HAP-1 (cell line): ENCODE measurements at regions of chr17 and their contacts with region 1.

Region 1: DNA sequence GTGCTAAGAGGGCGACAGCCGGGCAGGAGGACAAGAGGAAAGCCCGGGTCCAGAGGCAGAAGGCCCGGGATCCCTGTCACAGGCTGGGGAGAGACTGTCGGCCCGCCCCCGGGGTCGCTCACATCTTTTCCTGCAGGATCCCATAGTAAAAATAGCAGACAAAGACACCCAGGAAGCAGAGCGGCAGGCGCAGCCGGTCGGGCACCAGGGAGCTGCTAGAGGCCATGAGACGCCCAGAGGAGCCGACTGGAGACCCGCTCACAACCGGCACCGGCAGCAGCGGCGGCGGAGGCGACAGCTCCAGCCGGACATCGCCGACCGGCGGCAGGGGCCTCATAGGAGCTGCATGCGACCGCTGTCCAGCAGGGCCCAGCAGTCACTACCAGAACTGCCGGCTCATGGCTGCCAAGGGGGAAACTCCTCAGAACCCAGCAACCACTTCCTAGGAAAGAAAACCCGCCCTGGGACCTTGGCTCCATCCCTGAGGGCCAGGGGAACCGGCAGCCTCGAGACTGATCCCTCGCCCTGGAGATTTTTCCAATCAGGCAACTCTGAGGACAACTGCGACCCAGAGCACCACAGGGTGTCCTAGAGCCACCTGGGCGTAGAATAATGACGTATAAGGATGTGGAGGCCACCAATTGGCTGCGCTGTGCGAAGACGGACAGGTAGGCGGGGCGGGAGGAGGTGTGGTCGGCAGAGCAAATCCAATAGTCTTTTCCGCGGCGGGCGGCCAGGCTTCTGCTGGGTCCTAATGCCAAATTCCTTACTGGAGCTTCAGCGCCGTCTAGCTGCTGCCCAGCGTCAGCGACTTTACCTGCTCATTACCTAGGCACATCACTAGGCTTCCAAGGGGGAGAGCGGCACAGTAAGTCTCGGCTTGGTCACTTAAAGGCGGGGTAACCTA is at the start of gene SLC35B1:
- DNase-seq: peak; percentile 98 to 99
- H3K4me3 ChIP-seq: peak within 1 kb of the TSS; percentile 95
- H3K4me1 ChIP-seq: peaks cover 9% of the 10 kb centered on the region
- H3K27me3 ChIP-seq: no peaks in the 10 kb centered on the region

Region 2: DNA sequence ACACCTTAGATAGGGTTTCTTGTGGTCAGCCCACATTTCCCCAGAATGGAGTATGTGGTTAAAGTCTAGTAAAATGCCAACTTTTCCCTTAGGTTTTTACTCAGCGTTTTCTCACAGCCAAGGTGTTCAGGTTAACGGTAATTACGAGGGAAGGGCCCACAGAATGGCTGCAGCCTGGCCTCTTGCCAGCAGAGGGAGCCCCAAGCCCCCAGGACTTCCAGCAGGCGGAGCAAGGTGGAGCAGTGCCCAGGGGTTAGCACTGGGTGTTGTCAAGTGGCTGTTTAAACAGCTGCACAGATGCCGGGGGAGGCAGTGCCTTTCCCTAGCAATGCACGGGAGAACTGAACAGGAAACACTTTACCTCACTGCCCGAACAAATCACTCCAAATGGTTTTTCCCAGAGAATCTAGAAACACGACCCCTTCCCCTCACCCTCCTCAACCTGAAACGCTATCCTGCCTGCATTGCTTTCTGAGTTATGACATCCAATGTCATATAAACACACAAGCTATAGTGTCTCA is 299.8 kb before region 1 on chr17:
- in situ Hi-C with region 1: loop called (anchors 10 kb)
- DNase-seq: peak; percentile 54 to 85
- H3K4me3 ChIP-seq: no peak overlapping the region
- H3K4me1 ChIP-seq: no peaks in the 10 kb centered on the region
- H3K27me3 ChIP-seq: no peaks in the 10 kb centered on the region

Region 3: GRCh38 chr17:49843774-49844350 is 136.0 kb after region 1 on chr17:
- in situ Hi-C with region 1: loop called (anchors 10 kb)
- DNase-seq: peak; percentile 11 to 81
- H3K4me3 ChIP-seq: no peak overlapping the region
- H3K4me1 ChIP-seq: no peaks in the 10 kb centered on the region
- H3K27me3 ChIP-seq: no peaks in the 10 kb centered on the region

Region 4: GRCh38 chr17:49997791-49998703 is 290.2 kb after region 1 on chr17:
- in situ Hi-C with region 1: loop called (anchors 10 kb)
- DNase-seq: peak; percentile 76 to 93
- H3K4me3 ChIP-seq: no peak overlapping the region
- H3K4me1 ChIP-seq: peaks cover 10% of the 10 kb centered on the region
- H3K27me3 ChIP-seq: peaks cover 22% of the 10 kb centered on the region

Region 5: GRCh38 chr17:50026901-50027630 is 319.2 kb after region 1 on chr17:
- in situ Hi-C with region 1: no loop called
- DNase-seq: peak; percentile 35 to 87
- H3K4me3 ChIP-seq: no peak overlapping the region
- H3K4me1 ChIP-seq: no peaks in the 10 kb centered on the region
- H3K27me3 ChIP-seq: no peaks in the 10 kb centered on the region; the same call in none of the 2 replicates